PC-3 (cell line): ENCODE measurements at regions of chr22 and their contacts with region 1.

Region 1: DNA sequence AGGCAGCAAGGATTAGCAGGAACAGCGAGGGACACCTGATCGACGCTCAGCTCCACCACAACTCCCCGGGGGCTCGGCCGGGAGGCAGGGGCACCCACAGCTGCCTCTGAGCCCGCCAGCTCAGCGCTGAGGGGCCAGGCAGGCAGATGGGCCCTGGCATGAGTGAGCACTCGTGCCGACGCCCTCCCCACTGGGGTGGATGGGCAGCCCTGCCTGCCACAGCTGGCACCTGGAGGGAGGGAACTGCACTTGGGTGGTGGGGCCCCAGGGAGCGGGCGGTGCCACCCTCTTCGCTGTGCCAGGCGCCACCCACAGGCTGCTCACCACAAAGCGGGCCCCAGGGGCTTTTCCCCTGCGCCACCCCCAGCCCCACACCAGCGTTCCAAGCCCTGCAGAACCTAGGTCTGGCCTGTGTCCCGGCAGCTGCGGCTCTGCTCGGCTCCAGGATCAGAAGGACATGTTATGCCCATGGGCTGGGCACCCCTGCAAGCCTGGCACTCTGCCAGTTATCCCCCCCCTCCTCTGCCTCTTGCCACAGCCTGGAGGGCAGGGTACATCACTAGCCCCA is 28.8 kb downstream of the WNT7B start:
- DNase-seq: no peak
- ATAC-seq: no peak
- H3K4me3 ChIP-seq: no peak overlapping the region
- H3K27ac ChIP-seq: no peak overlapping the region
- H3K4me1 ChIP-seq: no peaks in the 10 kb centered on the region
- H3K27me3 ChIP-seq: no peaks in the 10 kb centered on the region
- CTCF ChIP-seq: no peak

Region 2: GRCh38 chr22:45934659-45935341 is 13.4 kb before region 1 on chr22:
- CTCF ChIA-PET with region 1: no interaction called
- POLR2A ChIA-PET with region 1: interaction called, 29 read pairs
- intact Hi-C with region 1: no loop called
- DNase-seq: peak; percentile 96
- ATAC-seq: peak; percentile 88
- H3K4me3 ChIP-seq: peak overlapping the region; percentile 52; the same call in 1 of the 2 replicates
- H3K27ac ChIP-seq: peak overlapping the region; percentile 87
- H3K4me1 ChIP-seq: peaks cover 30% of the 10 kb centered on the region
- H3K27me3 ChIP-seq: no peaks in the 10 kb centered on the region
- CTCF ChIP-seq: no peak

Region 3: DNA sequence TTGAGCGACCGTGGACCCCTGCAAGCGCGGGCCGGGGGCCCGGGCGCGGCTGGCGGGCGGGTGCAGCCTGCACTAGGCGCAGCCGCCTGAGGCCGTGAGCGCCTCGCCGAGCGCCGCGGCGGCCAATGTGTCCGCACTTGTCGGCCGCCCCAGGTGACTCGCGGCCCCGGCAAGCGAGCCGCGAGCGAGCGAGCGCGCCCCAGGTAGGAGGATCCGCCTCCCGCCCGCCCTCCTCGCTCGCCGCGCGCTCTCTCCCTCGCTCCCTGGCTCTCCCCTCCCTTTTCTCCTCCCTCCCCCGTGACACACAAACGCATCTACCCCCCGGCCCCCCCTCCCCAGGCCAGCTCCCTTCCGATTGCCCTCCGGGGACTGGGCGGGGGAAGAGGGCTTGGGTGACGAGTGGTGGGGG is 28.8 kb after region 1 on chr22 and contains the start of gene WNT7B:
- CTCF ChIA-PET with region 1: no interaction called
- POLR2A ChIA-PET with region 1: no interaction called
- intact Hi-C with region 1: no loop called
- DNase-seq: peak; percentile 83
- ATAC-seq: peak; percentile 28
- H3K4me3 ChIP-seq: peak within 1 kb of the TSS; percentile 90
- H3K27ac ChIP-seq: peak within 1 kb of the TSS; percentile 13
- H3K4me1 ChIP-seq: peaks cover 27% of the 10 kb centered on the region
- H3K27me3 ChIP-seq: no peaks in the 10 kb centered on the region
- CTCF ChIP-seq: no peak
- total RNA-seq, gene WNT7B: 42.0 and 73.1 TPM in 2 replicates

Region 4: GRCh38 chr22:46116491-46116958 is 168.4 kb after region 1 on chr22:
- CTCF ChIA-PET with region 1: no interaction called
- POLR2A ChIA-PET with region 1: no interaction called
- intact Hi-C with region 1: no loop called
- DNase-seq: peak; percentile 76
- ATAC-seq: peak; percentile 58
- H3K4me3 ChIP-seq: no peak overlapping the region
- H3K27ac ChIP-seq: no peak overlapping the region
- H3K4me1 ChIP-seq: no peaks in the 10 kb centered on the region
- H3K27me3 ChIP-seq: no peaks in the 10 kb centered on the region
- CTCF ChIP-seq: peak; percentile 85